GM12878 (cell line): ENCODE measurements at regions of chr10 and their contacts with region 1.

Region 1: DNA sequence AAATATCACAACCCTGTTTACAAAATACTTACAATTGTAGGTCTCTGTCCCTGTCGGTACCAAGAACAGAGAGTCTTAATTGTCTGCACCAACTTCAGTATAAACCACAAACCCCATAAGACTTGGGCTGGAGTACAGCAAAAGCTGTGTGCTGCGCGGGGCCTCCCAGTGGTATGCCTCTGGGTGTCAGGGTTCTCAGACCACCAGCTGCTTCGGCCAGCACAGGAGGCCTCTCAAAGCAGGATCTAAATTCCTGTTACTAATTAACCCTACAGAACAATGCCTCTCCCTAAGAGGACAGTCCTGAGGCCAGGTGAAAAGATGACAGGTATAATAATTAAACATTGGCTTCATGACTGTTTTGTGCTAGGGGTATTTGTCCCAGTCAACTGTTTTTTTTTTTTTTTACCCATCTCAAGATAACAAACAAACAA is 957 bp upstream of the SVIL start:
- DNase-seq: peak; percentile 27
- ATAC-seq: peak; percentile 86
- H3K4me3 ChIP-seq: no peak overlapping the region
- H3K27ac ChIP-seq: no peak overlapping the region
- H3K4me1 ChIP-seq: no peaks in the 10 kb centered on the region
- H3K27me3 ChIP-seq: no peaks in the 10 kb centered on the region
- CTCF ChIP-seq: no peak
- EP300 ChIP-seq: no peak
- POLR2A ChIP-seq: no peak
- RAD21 ChIP-seq: no peak

Region 2: DNA sequence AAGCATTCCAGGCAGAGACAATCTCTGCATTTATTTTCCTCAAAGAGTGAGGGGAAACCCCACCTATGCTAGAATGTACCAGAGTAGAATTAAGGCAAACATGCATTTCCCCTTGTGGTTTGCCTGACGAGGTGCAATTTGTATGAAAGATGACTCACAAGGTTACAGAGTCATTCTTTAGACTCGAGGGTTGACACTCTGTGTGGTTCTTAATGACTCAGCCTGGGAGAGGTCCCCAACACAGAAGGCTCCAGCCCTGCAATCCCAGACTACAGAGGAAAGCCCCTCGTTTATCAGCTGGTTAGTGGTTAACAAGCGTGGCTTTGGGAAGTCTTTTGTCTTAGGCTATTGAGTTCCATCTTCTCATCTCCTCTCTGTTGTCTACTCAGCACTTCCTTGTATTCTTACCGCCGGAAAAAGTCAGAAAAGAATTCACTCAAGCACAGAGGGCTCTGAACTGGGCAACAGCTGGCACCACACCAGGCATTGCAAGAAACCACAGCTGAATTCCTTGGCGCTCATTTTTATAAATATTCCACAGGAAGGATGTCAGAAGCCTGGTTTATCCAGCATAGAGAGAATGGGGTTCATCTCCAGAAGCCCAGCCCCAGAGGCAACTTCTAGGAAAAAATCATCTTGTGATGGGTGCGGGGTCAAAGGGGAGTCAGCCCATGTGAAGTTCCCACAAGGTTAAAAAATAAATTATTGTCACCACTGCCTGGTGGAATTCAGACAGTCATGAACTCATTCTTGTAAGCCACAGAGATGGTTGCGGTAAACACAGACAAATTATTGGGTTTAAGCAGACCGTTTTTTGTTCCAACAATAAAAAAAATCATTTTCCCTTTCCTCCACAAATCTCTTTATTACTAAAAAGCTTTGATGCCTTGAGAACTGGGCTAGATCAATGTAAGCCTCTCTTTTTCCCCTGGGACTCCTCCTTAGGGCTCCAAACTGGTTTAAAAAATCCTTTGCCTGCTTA is 23.5 kb after region 1 on chr10:
- CTCF ChIA-PET with region 1: interaction called, 4 read pairs
- POLR2A ChIA-PET with region 1: no interaction called
- RAD21 ChIA-PET with region 1: interaction called, 5 read pairs
- SMC1A ChIA-PET with region 1: interaction called, 11 read pairs
- in situ Hi-C with region 1: no loop called
- intact Hi-C with region 1: loop called (anchors 2 kb)
- DNase-seq: peak; percentile 92
- ATAC-seq: peak; percentile 97
- H3K4me3 ChIP-seq: no peak overlapping the region
- H3K27ac ChIP-seq: no peak overlapping the region
- H3K4me1 ChIP-seq: no peaks in the 10 kb centered on the region
- H3K27me3 ChIP-seq: no peaks in the 10 kb centered on the region
- CTCF ChIP-seq: no peak
- EP300 ChIP-seq: peak; percentile 88 to 97; a peak in 3 of 4 replicates
- POLR2A ChIP-seq: no peak
- RAD21 ChIP-seq: no peak

Region 3: DNA sequence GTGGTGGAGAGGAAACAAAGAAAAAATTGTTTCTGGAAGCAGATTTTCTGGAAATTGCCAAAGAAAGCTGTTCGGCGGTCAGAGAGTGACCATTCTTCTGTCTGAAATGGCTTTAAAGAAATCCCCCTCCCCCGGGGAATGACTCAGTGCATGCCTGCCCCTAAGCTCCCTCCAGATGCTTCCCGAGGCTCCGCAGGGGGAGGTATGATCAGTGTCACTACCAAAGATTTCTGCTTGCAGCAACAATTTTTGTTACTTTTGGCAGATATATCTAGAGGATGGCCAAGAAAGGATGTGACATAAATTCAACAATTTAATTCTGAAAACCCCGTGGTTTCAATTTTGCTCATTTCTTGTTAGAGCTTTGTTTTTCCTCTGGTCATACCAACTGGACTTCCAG is 259.7 kb after region 1 on chr10:
- CTCF ChIA-PET with region 1: no interaction called
- POLR2A ChIA-PET with region 1: no interaction called
- RAD21 ChIA-PET with region 1: no interaction called
- SMC1A ChIA-PET with region 1: no interaction called
- in situ Hi-C with region 1: no loop called
- intact Hi-C with region 1: no loop called
- DNase-seq: no peak
- ATAC-seq: no peak
- H3K4me3 ChIP-seq: no peak overlapping the region
- H3K27ac ChIP-seq: no peak overlapping the region
- H3K4me1 ChIP-seq: no peaks in the 10 kb centered on the region
- H3K27me3 ChIP-seq: no peaks in the 10 kb centered on the region
- CTCF ChIP-seq: no peak
- EP300 ChIP-seq: no peak
- POLR2A ChIP-seq: no peak
- RAD21 ChIP-seq: no peak